Heart left ventricle (tissue), 16 donors: ENCODE measurements at regions of chr6 and their contacts with region 1.

Region 1: GRCh38 chr6:133724726-133725125 is 164.2 kb upstream of the TCF21 start:
- DNase-seq: no peak
- ATAC-seq: no peak
- H3K4me3 ChIP-seq: no peak overlapping the region
- H3K27ac ChIP-seq: no peak overlapping the region
- H3K4me1 ChIP-seq: no peaks in the 10 kb centered on the region
- H3K27me3 ChIP-seq: no peaks in the 10 kb centered on the region
- CTCF ChIP-seq: no peak
- POLR2A ChIP-seq: no peak

Region 2: GRCh38 chr6:133577851-133578250 is 146.9 kb before region 1 on chr6:
- intact Hi-C with region 1: loop called in 1 of 10 experiments (anchors 5 kb)
- DNase-seq: no peak
- ATAC-seq: no peak
- H3K4me3 ChIP-seq: no peak overlapping the region
- H3K27ac ChIP-seq: no peak overlapping the region
- H3K4me1 ChIP-seq: no peaks in the 10 kb centered on the region
- H3K27me3 ChIP-seq: no peaks in the 10 kb centered on the region
- CTCF ChIP-seq: no peak
- POLR2A ChIP-seq: no peak